WTC11 (cell line): ENCODE measurements at regions of chr9 and their contacts with region 1.

Region 1: GRCh38 chr9:6055213-6055612 is 39.8 kb upstream of the RANBP6 start:
- DNase-seq: peak; percentile 30
- ATAC-seq: peak; percentile 51
- H3K4me3 Mint-ChIP-seq: no peak overlapping the region
- H3K27ac Mint-ChIP-seq: no peak overlapping the region
- H3K4me1 Mint-ChIP-seq: peaks cover 8% of the 10 kb centered on the region
- H3K27me3 Mint-ChIP-seq: peaks cover 8% of the 10 kb centered on the region; the same call in 1 of the 2 replicates
- CTCF ChIP-seq: peak; percentile 32; the same call in 1 of the 2 replicates

Region 2: GRCh38 chr9:5832543-5833529 is 222.4 kb before region 1 on chr9 and contains the start of gene ERMP1:
- CTCF ChIA-PET with region 1: interaction called, 10 read pairs
- POLR2A ChIA-PET with region 1: no interaction called
- DNase-seq: peak; percentile 90
- ATAC-seq: peak; percentile 87
- H3K4me3 Mint-ChIP-seq: peak within 1 kb of the TSS; percentile 86
- H3K27ac Mint-ChIP-seq: no peak within 1 kb of the TSS
- H3K4me1 Mint-ChIP-seq: peaks cover 28% of the 10 kb centered on the region
- H3K27me3 Mint-ChIP-seq: no peaks in the 10 kb centered on the region; the same call in 1 of the 2 replicates
- CTCF ChIP-seq: peak; percentile 73
- total RNA-seq, gene ERMP1: 25.4 to 28.8 TPM (median 28.8 TPM) in 3 replicates

Region 3: GRCh38 chr9:5988265-5988664 is 66.9 kb before region 1 on chr9:
- CTCF ChIA-PET with region 1: no interaction called
- POLR2A ChIA-PET with region 1: no interaction called
- DNase-seq: no peak
- ATAC-seq: no peak
- H3K4me3 Mint-ChIP-seq: no peak overlapping the region
- H3K27ac Mint-ChIP-seq: no peak overlapping the region
- H3K4me1 Mint-ChIP-seq: peaks cover 19% of the 10 kb centered on the region
- H3K27me3 Mint-ChIP-seq: no peaks in the 10 kb centered on the region
- CTCF ChIP-seq: no peak

Region 4: GRCh38 chr9:6008169-6008979 is 46.8 kb before region 1 on chr9:
- CTCF ChIA-PET with region 1: interaction called, 27 read pairs
- POLR2A ChIA-PET with region 1: interaction called, 4 read pairs
- DNase-seq: peak; percentile 91
- ATAC-seq: peak; percentile 71
- H3K4me3 Mint-ChIP-seq: peak overlapping the region; percentile 68
- H3K27ac Mint-ChIP-seq: peak overlapping the region; percentile 94
- H3K4me1 Mint-ChIP-seq: peaks cover 29% of the 10 kb centered on the region
- H3K27me3 Mint-ChIP-seq: no peaks in the 10 kb centered on the region
- CTCF ChIP-seq: no peak

Region 5: DNA sequence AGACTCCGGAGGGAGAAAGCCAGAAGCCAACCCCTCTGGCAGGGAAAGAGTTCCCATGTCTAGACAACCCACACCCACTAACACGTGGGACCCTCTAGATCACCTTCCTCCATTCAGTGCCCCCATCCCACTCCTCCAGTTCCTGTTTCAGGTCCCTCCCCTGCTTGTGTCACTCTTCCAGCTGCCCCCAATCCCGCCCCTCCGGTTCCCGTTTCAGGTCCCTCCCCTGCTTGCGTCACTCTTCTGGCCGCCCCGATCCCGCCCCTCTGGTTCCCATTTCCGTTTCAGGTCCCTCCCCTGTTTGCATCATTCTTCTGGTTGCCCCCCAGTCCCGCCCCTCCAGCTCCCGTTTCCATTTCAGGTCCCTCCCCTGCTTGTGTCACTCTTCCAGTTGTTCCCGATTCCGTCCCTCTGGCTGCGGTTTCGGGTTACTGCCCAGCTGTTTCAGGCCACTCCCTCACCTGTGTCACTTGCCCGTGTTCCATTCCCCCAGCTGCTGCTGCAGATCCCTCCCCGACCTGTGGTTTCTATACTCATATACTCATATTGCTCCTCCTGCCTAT is 25.0 kb after region 1 on chr9:
- CTCF ChIA-PET with region 1: interaction called, 33 read pairs
- POLR2A ChIA-PET with region 1: no interaction called
- DNase-seq: peak; percentile 97
- ATAC-seq: peak; percentile 95
- H3K4me3 Mint-ChIP-seq: peak overlapping the region; percentile 58
- H3K27ac Mint-ChIP-seq: peak overlapping the region; percentile 88
- H3K4me1 Mint-ChIP-seq: peaks cover 33% of the 10 kb centered on the region
- H3K27me3 Mint-ChIP-seq: no peaks in the 10 kb centered on the region
- CTCF ChIP-seq: no peak

Region 6: GRCh38 chr9:6188466-6188865 is 133.3 kb after region 1 on chr9:
- CTCF ChIA-PET with region 1: interaction called, 10 read pairs
- POLR2A ChIA-PET with region 1: no interaction called
- DNase-seq: no peak
- ATAC-seq: no peak
- H3K4me3 Mint-ChIP-seq: no peak overlapping the region
- H3K27ac Mint-ChIP-seq: no peak overlapping the region
- H3K4me1 Mint-ChIP-seq: peaks cover 11% of the 10 kb centered on the region
- H3K27me3 Mint-ChIP-seq: no peaks in the 10 kb centered on the region
- CTCF ChIP-seq: no peak